CD14-positive monocyte (primary cell): ENCODE measurements at regions of chr14 and their contacts with region 1.

Region 1: GRCh38 chr14:50736932-50737419 is 68.9 kb upstream of the SAV1 start:
- DNase-seq: no peak
- H3K4me3 ChIP-seq: no peak overlapping the region
- H3K4me3 Mint-ChIP-seq: no peak overlapping the region
- H3K27ac ChIP-seq: no peak overlapping the region
- H3K27ac Mint-ChIP-seq: peak overlapping the region in 1 of 7 donors; percentile 50
- H3K4me1 ChIP-seq: no peaks in the 10 kb centered on the region
- H3K4me1 Mint-ChIP-seq: no peaks in the 10 kb centered on the region
- H3K27me3 ChIP-seq: no peaks in the 10 kb centered on the region
- H3K27me3 Mint-ChIP-seq: no peaks in the 10 kb centered on the region
- CTCF ChIP-seq: no peak

Region 2: GRCh38 chr14:49808780-49809179 is 928.2 kb before region 1 on chr14:
- intact Hi-C with region 1: loop called in 1 of 2 experiments (anchors 10 kb)
- DNase-seq: no peak
- H3K4me3 ChIP-seq: no peak overlapping the region
- H3K4me3 Mint-ChIP-seq: no peak overlapping the region
- H3K27ac ChIP-seq: no peak overlapping the region
- H3K27ac Mint-ChIP-seq: no peak overlapping the region
- H3K4me1 ChIP-seq: no peaks in the 10 kb centered on the region
- H3K4me1 Mint-ChIP-seq: no peaks in the 10 kb centered on the region
- H3K27me3 ChIP-seq: no peaks in the 10 kb centered on the region
- H3K27me3 Mint-ChIP-seq: peaks cover 0 to 2% (median 0%) of the 10 kb centered on the region in 3 donors
- CTCF ChIP-seq: no peak

Region 3: DNA sequence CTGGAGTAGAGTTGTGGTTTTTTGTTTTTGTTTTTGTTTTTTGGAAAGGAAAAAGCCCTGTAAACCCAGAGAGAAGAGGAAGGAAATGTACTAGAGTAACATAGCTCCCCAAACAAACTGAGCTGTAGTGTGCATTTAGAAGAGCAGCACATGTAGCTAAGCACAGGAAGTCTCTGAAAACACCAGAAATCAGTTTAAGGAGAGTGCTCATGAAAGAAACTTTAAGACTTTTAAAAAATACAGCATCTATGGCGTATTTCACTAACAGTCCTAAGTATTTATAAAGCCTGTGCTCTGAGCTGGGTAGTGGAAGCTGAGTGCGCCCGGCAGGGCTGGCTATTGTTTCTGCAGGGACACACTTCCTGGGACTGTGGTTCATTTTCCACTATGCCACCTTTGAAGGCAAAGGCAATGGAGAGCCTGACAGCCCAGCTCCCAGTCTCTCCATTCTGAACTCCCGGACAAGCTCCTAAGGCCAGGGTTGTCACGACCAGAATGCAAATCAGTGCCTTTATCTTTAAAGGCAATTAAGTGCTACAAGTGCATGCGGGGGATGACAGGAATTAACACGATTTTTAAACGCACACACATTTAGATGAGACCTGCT is 48.6 kb after region 1 on chr14:
- intact Hi-C with region 1: no loop called
- DNase-seq: no peak
- H3K4me3 ChIP-seq: no peak overlapping the region
- H3K4me3 Mint-ChIP-seq: no peak overlapping the region
- H3K27ac ChIP-seq: peak overlapping the region in 1 of 2 donors; percentile 29
- H3K27ac Mint-ChIP-seq: peak overlapping the region in 3 of 7 donors; percentile 10 to 80 (median 12)
- H3K4me1 ChIP-seq: peaks cover 5 to 9% of the 10 kb centered on the region in 2 donors
- H3K4me1 Mint-ChIP-seq: peaks cover 22% of the 10 kb centered on the region
- H3K27me3 ChIP-seq: no peaks in the 10 kb centered on the region
- H3K27me3 Mint-ChIP-seq: peaks cover 0 to 1% (median 0%) of the 10 kb centered on the region in 3 donors
- CTCF ChIP-seq: no peak